CD8-positive, alpha-beta T cell (primary cell): ENCODE measurements at regions of chr15 and their contacts with region 1.

Region 1: DNA sequence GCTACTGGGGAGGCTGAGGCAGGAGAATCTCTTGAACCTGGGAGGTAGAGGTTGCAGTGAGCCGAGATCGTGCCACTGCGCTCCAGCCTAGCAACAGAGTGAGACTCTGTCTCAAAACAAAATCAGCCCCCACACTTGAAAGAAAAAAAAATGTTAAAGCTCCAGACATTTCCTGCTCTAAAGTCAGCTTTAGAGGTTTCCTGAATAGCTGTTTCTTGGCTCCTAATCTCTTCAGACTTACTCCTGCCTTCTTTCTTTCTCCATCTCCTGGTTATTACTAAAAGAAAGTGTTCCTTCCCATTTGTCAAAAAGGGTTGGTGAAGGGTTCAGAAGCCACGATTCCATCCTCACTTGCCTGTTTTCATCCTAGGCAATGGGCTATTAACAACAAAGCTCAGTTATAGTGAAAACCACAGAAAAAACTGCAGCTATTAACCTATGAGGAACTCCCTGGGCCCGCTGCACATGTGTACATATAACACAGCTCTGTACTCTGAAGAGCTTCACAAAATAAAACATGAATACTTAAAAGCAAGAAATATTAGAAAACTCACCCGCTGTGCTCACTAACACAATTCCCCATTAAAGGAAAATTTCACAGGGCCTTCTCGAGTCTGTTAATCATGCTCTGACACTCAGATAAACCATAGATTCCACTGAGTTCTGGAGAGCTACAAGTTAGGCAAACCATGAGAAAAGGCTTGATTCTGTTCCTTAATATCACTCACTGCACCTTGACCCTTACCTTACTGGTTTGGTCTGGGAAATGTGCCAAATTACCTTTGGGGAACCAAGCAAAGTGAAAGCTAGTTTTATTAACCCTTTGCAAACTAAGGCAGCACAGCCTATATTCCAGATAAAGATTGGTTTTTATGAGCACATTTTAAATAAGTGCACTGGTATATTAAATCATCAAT is 89.9 kb upstream of the TSPAN3 start:
- DNase-seq: peak in 4 of 9 experiments; percentile 9 to 57 (median 28)
- ATAC-seq: peak; percentile 46
- H3K4me3 ChIP-seq: peak overlapping the region in 1 of 2 experiments; percentile 1
- H3K4me3 Mint-ChIP-seq: peak overlapping the region; percentile 69
- H3K27ac ChIP-seq: peak overlapping the region in 1 of 2 experiments; percentile 74
- H3K27ac Mint-ChIP-seq: peak overlapping the region; percentile 92
- H3K4me1 ChIP-seq: peaks cover 27% of the 10 kb centered on the region
- H3K4me1 Mint-ChIP-seq: peaks cover 58% of the 10 kb centered on the region
- H3K27me3 ChIP-seq: no peaks in the 10 kb centered on the region
- H3K27me3 Mint-ChIP-seq: no peaks in the 10 kb centered on the region
- CTCF ChIP-seq: no peak

Region 2: DNA sequence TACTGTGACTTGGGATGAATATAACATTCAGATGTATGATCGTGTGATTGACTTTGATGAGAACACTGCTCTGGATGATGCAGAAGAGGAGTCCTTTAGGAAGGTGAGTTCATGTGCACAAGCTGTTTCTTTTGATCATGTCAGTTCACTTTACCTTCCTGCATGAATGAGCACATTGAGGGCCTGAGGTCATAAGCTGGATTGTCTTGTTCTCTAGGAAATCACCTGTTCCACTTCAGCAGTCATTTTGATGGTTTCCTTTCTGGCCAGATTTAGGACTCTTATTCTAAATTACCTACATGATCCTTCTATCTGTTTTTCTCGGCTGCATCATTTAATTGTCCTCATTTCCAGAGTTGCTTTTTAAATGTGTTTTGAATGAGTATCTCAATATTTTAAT is 225.2 kb before region 1 on chr15:
- CTCF ChIA-PET with region 1: no interaction called
- POLR2A ChIA-PET with region 1: no interaction called
- intact Hi-C with region 1: no loop called
- DNase-seq: peak in 1 of 9 experiments; percentile 20
- ATAC-seq: no peak
- H3K4me3 ChIP-seq: no peak overlapping the region
- H3K4me3 Mint-ChIP-seq: no peak overlapping the region
- H3K27ac ChIP-seq: no peak overlapping the region
- H3K27ac Mint-ChIP-seq: no peak overlapping the region
- H3K4me1 ChIP-seq: peaks cover 21% of the 10 kb centered on the region
- H3K4me1 Mint-ChIP-seq: peaks cover 35% of the 10 kb centered on the region
- H3K27me3 ChIP-seq: no peaks in the 10 kb centered on the region
- H3K27me3 Mint-ChIP-seq: no peaks in the 10 kb centered on the region
- CTCF ChIP-seq: no peak

Region 3: DNA sequence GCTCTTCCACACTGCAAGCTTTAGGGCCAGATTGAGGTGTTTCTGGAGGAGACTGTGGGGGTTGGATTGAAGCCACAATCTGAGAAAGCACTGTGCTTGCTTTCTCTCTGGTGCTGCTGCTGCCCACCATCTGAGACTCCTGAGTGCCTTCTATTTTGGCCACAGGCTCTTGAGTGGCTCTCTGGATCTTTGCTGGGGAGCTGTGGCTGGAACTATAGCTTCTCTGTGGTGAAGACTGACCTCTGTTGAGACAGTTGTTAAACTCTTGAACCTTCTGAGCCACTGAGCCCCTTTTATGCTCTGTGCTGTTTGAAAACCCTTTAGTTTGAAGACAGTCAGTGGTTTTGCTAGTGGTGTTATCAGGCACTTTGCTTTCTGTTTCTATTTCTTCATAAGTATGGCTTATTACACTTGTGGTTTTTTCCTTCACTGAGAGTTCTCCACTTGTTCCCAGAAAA is 18.8 kb after region 1 on chr15:
- CTCF ChIA-PET with region 1: interaction called, 3 read pairs
- POLR2A ChIA-PET with region 1: interaction called, 15 read pairs
- intact Hi-C with region 1: loop called in 1 of 2 experiments (anchors 1 kb)
- DNase-seq: peak in 2 of 9 experiments; percentile 31 to 62
- ATAC-seq: peak; percentile 59
- H3K4me3 ChIP-seq: peak overlapping the region; percentile 12 to 15
- H3K4me3 Mint-ChIP-seq: peak overlapping the region; percentile 60
- H3K27ac ChIP-seq: peak overlapping the region; percentile 40 to 78
- H3K27ac Mint-ChIP-seq: peak overlapping the region; percentile 89
- H3K4me1 ChIP-seq: peaks cover 40% of the 10 kb centered on the region
- H3K4me1 Mint-ChIP-seq: peaks cover 44% of the 10 kb centered on the region
- H3K27me3 ChIP-seq: no peaks in the 10 kb centered on the region
- H3K27me3 Mint-ChIP-seq: no peaks in the 10 kb centered on the region
- CTCF ChIP-seq: no peak

Region 4: GRCh38 chr15:77208241-77208640 is 47.4 kb after region 1 on chr15:
- CTCF ChIA-PET with region 1: no interaction called
- POLR2A ChIA-PET with region 1: no interaction called
- intact Hi-C with region 1: no loop called
- DNase-seq: no peak
- ATAC-seq: no peak
- H3K4me3 ChIP-seq: no peak overlapping the region
- H3K4me3 Mint-ChIP-seq: no peak overlapping the region
- H3K27ac ChIP-seq: no peak overlapping the region
- H3K27ac Mint-ChIP-seq: no peak overlapping the region
- H3K4me1 ChIP-seq: no peaks in the 10 kb centered on the region
- H3K4me1 Mint-ChIP-seq: peaks cover 5% of the 10 kb centered on the region
- H3K27me3 ChIP-seq: no peaks in the 10 kb centered on the region
- H3K27me3 Mint-ChIP-seq: no peaks in the 10 kb centered on the region
- CTCF ChIP-seq: no peak

Region 5: DNA sequence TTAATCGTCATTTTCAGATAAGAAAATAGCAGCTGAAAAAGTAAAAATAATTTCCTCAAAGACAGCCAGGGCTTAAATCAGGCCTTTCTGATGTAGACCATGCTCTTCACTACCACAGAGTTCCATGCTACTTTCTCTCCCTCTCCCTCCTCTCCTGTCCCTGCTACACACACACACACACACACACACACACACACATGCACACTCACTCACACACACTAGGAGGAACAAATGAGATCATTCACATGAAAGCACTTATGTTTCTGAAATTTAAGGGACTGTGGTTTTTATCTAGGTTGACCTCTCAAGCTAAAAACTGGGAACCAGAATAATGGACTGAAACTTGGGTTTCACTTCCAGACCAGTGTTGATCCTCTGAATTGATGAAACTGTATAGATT is 1375.3 kb after region 1 on chr15:
- CTCF ChIA-PET with region 1: no interaction called
- POLR2A ChIA-PET with region 1: no interaction called
- intact Hi-C with region 1: no loop called
- DNase-seq: no peak
- ATAC-seq: no peak
- H3K4me3 ChIP-seq: no peak overlapping the region
- H3K4me3 Mint-ChIP-seq: no peak overlapping the region
- H3K27ac ChIP-seq: no peak overlapping the region
- H3K27ac Mint-ChIP-seq: no peak overlapping the region
- H3K4me1 ChIP-seq: peaks cover 8% of the 10 kb centered on the region
- H3K4me1 Mint-ChIP-seq: peaks cover 7% of the 10 kb centered on the region
- H3K27me3 ChIP-seq: no peaks in the 10 kb centered on the region
- H3K27me3 Mint-ChIP-seq: no peaks in the 10 kb centered on the region
- CTCF ChIP-seq: no peak

Region 6: DNA sequence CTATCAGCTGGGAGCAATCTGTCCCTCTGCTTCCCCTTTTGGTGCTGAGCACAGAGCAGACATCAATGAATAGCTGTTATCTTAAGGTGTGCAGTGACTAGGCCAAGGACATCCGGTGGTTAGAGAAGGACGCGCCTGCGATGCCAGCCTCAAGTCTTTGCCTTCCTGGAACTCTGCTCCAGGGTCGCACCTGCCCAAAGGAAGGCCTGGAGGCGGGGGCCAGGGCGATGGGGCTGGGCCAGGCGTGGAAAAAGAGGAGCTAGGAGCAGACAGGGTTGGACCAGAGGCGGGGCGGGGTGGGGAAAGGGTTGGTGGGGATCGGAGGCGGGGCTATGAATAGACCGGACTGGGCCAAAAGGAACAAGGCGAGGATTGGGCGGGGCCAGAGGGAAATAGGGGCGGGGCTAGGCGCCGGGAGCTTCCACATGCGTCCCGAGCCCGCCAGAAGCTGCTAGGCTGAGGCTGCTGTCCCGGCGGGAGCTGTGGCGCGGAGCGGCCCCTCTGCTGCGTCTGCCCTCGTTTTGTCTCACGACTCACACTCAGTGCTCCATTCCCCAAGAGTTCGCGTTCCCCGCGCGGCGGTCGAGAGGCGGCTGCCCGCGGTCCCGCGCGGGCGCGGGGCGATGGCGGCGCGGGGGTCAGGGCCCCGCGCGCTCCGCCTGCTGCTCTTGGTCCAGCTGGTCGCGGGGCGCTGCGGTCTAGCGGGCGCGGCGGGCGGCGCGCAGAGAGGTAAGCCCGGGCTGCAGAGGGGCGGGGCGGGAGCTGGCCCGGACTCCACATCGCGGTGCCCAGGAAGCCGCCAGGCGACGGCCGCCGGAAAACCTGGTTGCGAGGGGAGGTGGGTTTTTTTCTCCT is 1404.5 kb after region 1 on chr15 and contains the start of gene CHRNA5:
- CTCF ChIA-PET with region 1: no interaction called
- POLR2A ChIA-PET with region 1: no interaction called
- intact Hi-C with region 1: no loop called
- DNase-seq: peak; percentile 10 to 80 (median 64)
- ATAC-seq: peak; percentile 70
- H3K4me3 ChIP-seq: peak within 1 kb of the TSS; percentile 70 to 71
- H3K4me3 Mint-ChIP-seq: peak within 1 kb of the TSS; percentile 85
- H3K27ac ChIP-seq: peak within 1 kb of the TSS in 1 of 2 experiments; percentile 46
- H3K27ac Mint-ChIP-seq: no peak within 1 kb of the TSS
- H3K4me1 ChIP-seq: peaks cover 17% of the 10 kb centered on the region
- H3K4me1 Mint-ChIP-seq: peaks cover 22% of the 10 kb centered on the region
- H3K27me3 ChIP-seq: no peaks in the 10 kb centered on the region
- H3K27me3 Mint-ChIP-seq: peaks cover 38% of the 10 kb centered on the region
- CTCF ChIP-seq: no peak
- total RNA-seq, gene CHRNA5: 0.56 TPM in 1 of 2 experiments, not detected in the other